GM12878 (cell line): ENCODE measurements at regions of chr2 and their contacts with region 1.

Region 1: GRCh38 chr2:94956797-94957391 is 68.6 kb upstream of the MAL start:
- DNase-seq: no peak
- ATAC-seq: peak; percentile 77
- H3K4me3 ChIP-seq: no peak overlapping the region
- H3K27ac ChIP-seq: no peak overlapping the region
- H3K4me1 ChIP-seq: no peaks in the 10 kb centered on the region
- H3K27me3 ChIP-seq: peaks cover 0 to 3% of the 10 kb centered on the region in 2 experiments; a peak in 1 of 4 replicates
- CTCF ChIP-seq: peak; percentile 70 to 87 (median 85)
- EP300 ChIP-seq: no peak
- POLR2A ChIP-seq: no peak
- RAD21 ChIP-seq: peak; percentile 52

Region 2: DNA sequence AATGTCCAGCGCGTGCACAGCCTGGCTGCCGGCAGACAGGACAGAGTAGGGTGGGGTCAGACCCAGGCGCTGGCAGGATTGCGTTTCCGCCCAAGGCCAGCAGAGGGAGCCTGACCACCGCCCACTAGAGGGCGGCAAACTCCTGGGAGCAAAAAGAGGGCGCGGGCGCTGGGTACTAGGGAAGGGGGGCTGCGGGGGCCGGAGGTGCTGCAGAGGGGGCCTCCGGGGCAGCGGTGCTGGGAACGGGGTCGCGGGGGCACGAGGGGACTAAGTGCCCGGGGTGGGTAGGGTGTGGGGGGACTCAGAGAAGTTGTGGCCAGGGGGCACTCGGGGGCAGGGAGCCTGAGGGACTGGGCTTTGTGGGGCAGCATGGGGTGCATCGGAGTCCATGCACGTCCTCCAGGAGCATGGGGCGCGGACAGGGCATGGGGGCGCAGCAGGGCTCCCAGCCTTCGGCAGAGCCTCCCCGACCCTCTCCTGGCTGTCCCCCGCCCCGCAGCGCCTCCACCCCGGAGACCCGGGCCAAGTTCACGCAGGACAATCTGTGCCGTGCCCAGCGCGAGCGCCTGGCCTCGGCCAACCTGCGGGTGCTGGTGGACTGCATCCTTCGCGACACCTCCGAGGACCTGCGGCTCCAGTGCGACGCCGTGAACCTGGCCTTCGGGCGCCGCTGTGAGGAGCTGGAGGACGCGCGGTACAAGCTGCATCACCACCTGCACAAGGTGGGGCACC is 82.5 kb before region 1 on chr2:
- CTCF ChIA-PET with region 1: interaction called, 53 read pairs
- POLR2A ChIA-PET with region 1: no interaction called
- RAD21 ChIA-PET with region 1: interaction called, 15 read pairs
- SMC1A ChIA-PET with region 1: interaction called, 6 read pairs
- in situ Hi-C with region 1: no loop called
- intact Hi-C with region 1: loop called (anchors 2 kb)
- DNase-seq: no peak
- ATAC-seq: peak; percentile 98
- H3K4me3 ChIP-seq: no peak overlapping the region
- H3K27ac ChIP-seq: no peak overlapping the region
- H3K4me1 ChIP-seq: no peaks in the 10 kb centered on the region
- H3K27me3 ChIP-seq: no peaks in the 10 kb centered on the region
- CTCF ChIP-seq: peak; percentile 98 to 100 (median 100)
- EP300 ChIP-seq: no peak
- POLR2A ChIP-seq: no peak
- RAD21 ChIP-seq: peak; percentile 70

Region 3: GRCh38 chr2:95007822-95008221 is 50.9 kb after region 1 on chr2:
- CTCF ChIA-PET with region 1: no interaction called
- POLR2A ChIA-PET with region 1: no interaction called
- RAD21 ChIA-PET with region 1: no interaction called
- SMC1A ChIA-PET with region 1: no interaction called
- in situ Hi-C with region 1: no loop called
- intact Hi-C with region 1: no loop called
- DNase-seq: no peak
- ATAC-seq: no peak
- H3K4me3 ChIP-seq: no peak overlapping the region
- H3K27ac ChIP-seq: no peak overlapping the region
- H3K4me1 ChIP-seq: peaks cover 10% of the 10 kb centered on the region
- H3K27me3 ChIP-seq: no peaks in the 10 kb centered on the region
- CTCF ChIP-seq: no peak
- EP300 ChIP-seq: no peak
- POLR2A ChIP-seq: no peak
- RAD21 ChIP-seq: no peak

Region 4: DNA sequence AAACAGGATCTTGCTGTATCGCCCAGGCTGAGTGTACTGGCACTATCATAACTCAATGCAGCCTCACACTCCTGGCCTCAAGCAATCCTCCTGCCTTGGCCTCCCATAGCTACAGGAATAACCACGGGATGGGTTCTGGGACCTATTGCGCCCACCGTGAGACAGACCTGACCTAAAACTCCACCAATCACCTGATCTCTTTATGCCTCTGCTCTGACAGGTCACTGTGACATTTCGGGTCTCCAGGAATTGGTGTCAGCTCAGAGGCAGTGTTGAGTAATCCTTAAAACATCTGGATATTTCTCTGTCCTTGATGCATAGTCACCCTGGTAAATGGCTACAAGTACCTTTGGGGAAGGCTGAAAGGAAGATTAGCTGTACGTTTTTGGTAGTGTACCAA is 169.9 kb after region 1 on chr2:
- CTCF ChIA-PET with region 1: no interaction called
- POLR2A ChIA-PET with region 1: no interaction called
- RAD21 ChIA-PET with region 1: no interaction called
- SMC1A ChIA-PET with region 1: no interaction called
- in situ Hi-C with region 1: no loop called
- intact Hi-C with region 1: no loop called
- DNase-seq: no peak
- ATAC-seq: no peak
- H3K4me3 ChIP-seq: no peak overlapping the region
- H3K27ac ChIP-seq: no peak overlapping the region
- H3K4me1 ChIP-seq: no peaks in the 10 kb centered on the region; the same call in 1 of the 2 replicates
- H3K27me3 ChIP-seq: no peaks in the 10 kb centered on the region
- CTCF ChIP-seq: no peak
- EP300 ChIP-seq: no peak
- POLR2A ChIP-seq: no peak
- RAD21 ChIP-seq: no peak